ENCODE measurements at regions of chr20 and their contacts with region 1.

Region 1: GRCh38 chr20:41524980-41525613 is 93.1 kb downstream of the CHD6 start:
- DNase-seq: peak; percentile 83
- H3K4me3 ChIP-seq: peak overlapping the region; percentile 34
- H3K27ac ChIP-seq: peak overlapping the region; percentile 32
- H3K4me1 ChIP-seq: peaks cover 31% of the 10 kb centered on the region
- H3K27me3 ChIP-seq: no peaks in the 10 kb centered on the region
- CTCF ChIP-seq: no peak

Region 2: DNA sequence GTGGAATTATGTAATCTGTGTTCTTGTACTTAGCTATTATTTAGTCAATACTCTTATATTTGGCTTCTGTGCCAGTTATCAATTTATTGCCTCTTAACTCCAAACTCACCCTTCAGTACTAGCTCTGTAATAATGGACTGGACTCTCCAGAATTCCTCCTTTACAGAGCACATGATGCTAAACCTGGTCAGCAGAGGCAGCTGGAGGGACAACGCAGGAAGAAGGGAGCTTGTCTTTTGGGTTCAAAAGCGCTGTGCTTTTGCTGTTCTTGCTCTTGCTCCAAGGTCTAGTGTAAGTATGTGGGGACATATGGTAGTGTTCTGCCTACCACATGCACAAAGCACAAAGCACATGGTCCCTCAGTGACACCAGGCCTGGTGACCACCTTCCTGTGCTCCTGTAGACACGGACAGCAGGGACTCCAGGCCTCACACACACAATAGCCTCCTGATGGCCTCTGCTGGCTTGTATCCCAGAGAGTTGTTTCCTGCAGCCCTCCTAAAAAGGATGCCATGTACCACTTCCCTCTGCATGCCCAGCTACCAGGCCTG is 47.0 kb after region 1 on chr20:
- intact Hi-C with region 1: no loop called
- DNase-seq: no peak
- H3K4me3 ChIP-seq: no peak overlapping the region
- H3K27ac ChIP-seq: no peak overlapping the region
- H3K4me1 ChIP-seq: peaks cover 98% of the 10 kb centered on the region
- H3K27me3 ChIP-seq: no peaks in the 10 kb centered on the region
- CTCF ChIP-seq: no peak

Region 3: DNA sequence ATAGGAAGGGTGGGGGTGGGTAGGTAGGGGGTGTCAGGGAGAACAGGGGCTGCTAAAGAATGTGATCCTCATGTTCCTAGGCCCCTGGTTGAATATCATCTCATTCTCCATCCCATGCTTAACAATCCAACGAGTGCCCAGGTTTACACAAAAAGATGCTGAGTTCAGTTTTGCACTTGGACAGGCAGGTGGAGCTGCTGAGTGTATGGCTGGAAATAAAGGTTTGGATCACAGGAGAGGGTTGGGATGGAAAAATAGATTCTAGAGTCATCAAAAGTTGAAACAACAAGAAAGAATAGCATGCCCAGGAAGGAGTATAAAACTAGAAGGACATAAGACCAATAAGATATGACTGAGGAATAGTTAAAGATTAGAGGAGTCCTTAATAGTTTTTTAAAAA is 78.9 kb after region 1 on chr20:
- intact Hi-C with region 1: loop called (anchors 10 kb)
- DNase-seq: no peak
- H3K4me3 ChIP-seq: no peak overlapping the region
- H3K27ac ChIP-seq: no peak overlapping the region
- H3K4me1 ChIP-seq: peaks cover 62% of the 10 kb centered on the region
- H3K27me3 ChIP-seq: no peaks in the 10 kb centered on the region
- CTCF ChIP-seq: no peak